Right ventricle myocardium inferior (tissue), 1 donor: ENCODE measurements at regions of chr7 and their contacts with region 1.

Region 1: DNA sequence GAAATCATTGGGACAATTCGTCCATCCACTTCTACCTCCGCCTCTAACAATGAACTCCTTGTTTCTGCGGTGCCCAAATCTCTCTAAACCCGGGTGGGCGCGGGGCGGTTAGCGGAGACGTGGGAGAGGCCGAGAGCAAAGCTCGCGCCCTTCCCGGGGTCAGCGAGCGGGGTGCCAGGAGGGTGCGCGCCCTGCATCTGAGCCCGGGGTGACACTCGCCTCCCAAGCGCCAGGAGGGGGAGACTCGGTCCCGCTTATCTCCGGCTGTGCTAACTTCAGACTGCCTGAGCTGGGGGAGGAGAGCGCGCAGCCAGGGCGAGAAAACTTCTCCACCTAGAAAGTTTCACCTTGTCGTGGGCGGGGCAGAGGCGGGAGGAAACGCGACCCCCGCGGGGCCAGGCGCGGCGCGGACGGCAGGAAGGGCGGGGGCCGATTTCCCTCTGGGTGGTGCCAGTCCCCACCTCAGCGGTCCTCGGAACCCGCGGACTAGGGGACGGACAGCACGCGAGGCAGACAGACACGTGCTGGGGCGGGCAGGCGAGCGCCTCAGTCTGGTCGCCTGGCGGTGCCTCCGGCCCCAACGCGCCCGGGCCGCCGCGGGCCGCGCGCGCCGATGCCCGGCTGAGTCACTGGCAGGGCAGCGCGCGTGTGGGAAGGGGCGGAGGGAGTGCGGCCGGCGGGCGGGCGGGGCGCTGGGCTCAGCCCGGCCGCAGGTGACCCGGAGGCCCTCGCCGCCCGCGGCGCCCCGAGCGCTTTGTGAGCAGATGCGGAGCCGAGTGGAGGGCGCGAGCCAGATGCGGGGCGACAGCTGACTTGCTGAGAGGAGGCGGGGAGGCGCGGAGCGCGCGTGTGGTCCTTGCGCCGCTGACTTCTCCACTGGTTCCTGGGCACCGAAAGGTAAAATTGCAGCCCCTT is at the start of gene MET:
- DNase-seq: peak; percentile 79
- ATAC-seq: peak; percentile 89
- total RNA-seq, gene MET: 15.9 TPM

Region 2: GRCh38 chr7:116630932-116631745 is 40.8 kb before region 1 on chr7:
- intact Hi-C with region 1: loop called (anchors 5 kb)
- DNase-seq: peak; percentile 77
- ATAC-seq: peak; percentile 57

Region 3: GRCh38 chr7:116786791-116787443 is 115.0 kb after region 1 on chr7:
- intact Hi-C with region 1: loop called (anchors 5 kb)
- DNase-seq: no peak
- ATAC-seq: peak; percentile 23

Region 4: GRCh38 chr7:116809636-116810266 is 137.8 kb after region 1 on chr7:
- intact Hi-C with region 1: loop called (anchors 2 kb)
- DNase-seq: no peak
- ATAC-seq: peak; percentile 52